ENCODE measurements at regions of chr15 and their contacts with region 1.

Region 1: DNA sequence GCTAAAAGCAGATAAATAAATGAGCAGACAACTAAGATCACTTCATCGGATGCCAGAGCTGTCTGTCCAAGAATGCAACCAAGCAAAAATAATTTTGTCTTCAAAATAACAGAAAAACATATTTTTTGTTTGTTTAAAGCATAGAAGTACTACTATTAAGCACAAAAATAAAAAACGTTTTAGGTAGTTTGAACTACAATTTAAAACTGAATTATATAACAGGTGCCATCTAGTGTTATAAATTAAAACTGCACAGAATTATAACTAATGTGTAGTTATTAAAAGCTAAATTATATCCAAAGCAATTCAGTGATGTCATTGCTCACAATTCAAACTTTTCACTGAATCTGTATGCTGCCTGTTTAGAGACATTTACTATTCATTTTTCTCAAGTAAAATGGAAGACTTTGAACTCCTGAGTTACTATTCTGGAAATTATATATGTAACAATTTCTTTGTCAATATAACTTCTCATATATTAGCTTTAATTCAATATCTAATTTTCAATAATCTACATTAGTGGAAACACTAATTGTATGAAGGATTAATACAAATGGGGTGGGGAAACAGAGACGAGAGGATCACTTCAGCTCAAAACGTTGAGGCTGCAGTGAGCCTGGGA is 29.5 kb downstream of the LINS1 start:
- DNase-seq: no peak
- H3K4me3 ChIP-seq: no peak overlapping the region
- H3K27ac ChIP-seq: no peak overlapping the region
- H3K4me1 ChIP-seq: no peaks in the 10 kb centered on the region
- H3K27me3 ChIP-seq: no peaks in the 10 kb centered on the region
- CTCF ChIP-seq: peak; percentile 71

Region 2: DNA sequence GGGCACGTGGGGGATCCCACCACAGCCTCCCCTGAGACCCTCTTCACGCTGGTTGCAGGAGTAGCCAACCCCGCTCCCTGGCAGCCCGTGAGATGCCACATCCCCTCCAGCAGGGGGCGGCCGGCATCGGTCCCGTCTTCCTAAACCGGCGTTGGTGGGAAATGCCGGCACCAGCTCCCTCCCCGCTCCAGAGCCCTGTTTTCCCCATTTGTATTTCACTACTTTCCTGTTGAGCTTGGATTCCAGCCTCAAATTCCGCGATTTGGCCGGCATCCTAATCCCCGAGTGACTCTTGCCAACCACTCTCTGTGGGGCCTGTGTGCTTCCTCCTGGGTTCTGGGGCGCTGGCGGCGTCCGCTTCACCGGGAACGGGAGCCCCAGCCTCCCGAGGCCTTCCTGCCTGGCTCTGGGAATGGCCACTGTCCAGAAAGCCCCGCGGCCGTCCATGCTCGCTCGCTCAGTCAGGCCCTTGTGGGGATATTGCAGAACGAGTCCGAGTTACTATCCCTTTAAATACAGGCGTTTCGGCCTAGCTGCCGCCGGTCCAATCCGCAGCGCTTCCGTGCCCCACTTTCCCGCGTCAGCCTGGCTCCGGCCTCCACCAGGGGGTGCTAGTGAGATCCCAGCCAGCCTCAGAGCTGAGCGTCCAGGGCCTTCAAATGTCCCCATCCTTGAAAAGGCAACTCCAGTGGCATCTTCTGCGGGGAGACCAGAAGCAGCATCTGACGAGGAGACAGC is 222.6 kb before region 1 on chr15:
- intact Hi-C with region 1: loop called (anchors 5 kb)
- DNase-seq: peak; percentile 93
- H3K4me3 ChIP-seq: peak overlapping the region; percentile 87
- H3K27ac ChIP-seq: peak overlapping the region; percentile 97
- H3K4me1 ChIP-seq: peaks cover 14% of the 10 kb centered on the region
- H3K27me3 ChIP-seq: peaks cover 24% of the 10 kb centered on the region
- CTCF ChIP-seq: peak; percentile 74